MCF 10A (cell line): ENCODE measurements at regions of chr18 and their contacts with region 1.

Region 1: GRCh38 chr18:63979409-63979920 is 9.6 kb downstream of the SERPINB8 start:
- DNase-seq: peak; percentile 62
- H3K4me3 Mint-ChIP-seq: peak overlapping the region; percentile 19
- H3K27ac Mint-ChIP-seq: peak overlapping the region; percentile 46
- H3K4me1 Mint-ChIP-seq: peaks cover 19% of the 10 kb centered on the region
- H3K27me3 Mint-ChIP-seq: no peaks in the 10 kb centered on the region
- CTCF ChIP-seq: peak; percentile 74

Region 2: GRCh38 chr18:63439334-63439733 is 540.1 kb before region 1 on chr18:
- CTCF ChIA-PET with region 1: no interaction called
- POLR2A ChIA-PET with region 1: no interaction called
- intact Hi-C with region 1: no loop called
- DNase-seq: peak; percentile 71
- H3K4me3 Mint-ChIP-seq: no peak overlapping the region
- H3K27ac Mint-ChIP-seq: no peak overlapping the region
- H3K4me1 Mint-ChIP-seq: peaks cover 34% of the 10 kb centered on the region
- H3K27me3 Mint-ChIP-seq: no peaks in the 10 kb centered on the region
- CTCF ChIP-seq: peak; percentile 74

Region 3: DNA sequence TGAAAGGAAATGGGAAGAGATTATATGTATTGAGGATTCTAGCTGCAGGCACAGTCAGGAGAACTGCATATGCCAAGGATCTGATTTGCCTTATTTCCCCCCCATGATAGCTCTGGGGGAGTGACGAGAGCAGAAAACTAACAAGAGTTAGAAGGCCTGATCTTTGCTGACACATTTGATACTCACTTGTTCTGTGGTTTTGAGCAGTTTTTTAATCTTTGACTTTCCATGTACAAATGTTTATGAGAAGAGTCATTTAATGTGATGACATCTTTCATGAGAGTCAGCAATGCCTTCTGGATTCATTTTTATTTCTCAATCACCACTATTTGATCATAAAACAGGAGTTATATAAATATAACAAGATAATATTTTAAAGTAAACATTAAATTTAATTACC is 216.9 kb before region 1 on chr18:
- CTCF ChIA-PET with region 1: no interaction called
- POLR2A ChIA-PET with region 1: no interaction called
- intact Hi-C with region 1: no loop called
- DNase-seq: peak; percentile 64
- H3K4me3 Mint-ChIP-seq: no peak overlapping the region
- H3K27ac Mint-ChIP-seq: peak overlapping the region; percentile 10
- H3K4me1 Mint-ChIP-seq: peaks cover 15% of the 10 kb centered on the region
- H3K27me3 Mint-ChIP-seq: no peaks in the 10 kb centered on the region
- CTCF ChIP-seq: no peak

Region 4: GRCh38 chr18:63848159-63848558 is 131.3 kb before region 1 on chr18:
- CTCF ChIA-PET with region 1: interaction called, 5 read pairs
- POLR2A ChIA-PET with region 1: no interaction called
- intact Hi-C with region 1: loop called (anchors 2 kb)
- DNase-seq: peak; percentile 73
- H3K4me3 Mint-ChIP-seq: no peak overlapping the region
- H3K27ac Mint-ChIP-seq: no peak overlapping the region
- H3K4me1 Mint-ChIP-seq: no peaks in the 10 kb centered on the region
- H3K27me3 Mint-ChIP-seq: no peaks in the 10 kb centered on the region
- CTCF ChIP-seq: peak; percentile 64

Region 5: DNA sequence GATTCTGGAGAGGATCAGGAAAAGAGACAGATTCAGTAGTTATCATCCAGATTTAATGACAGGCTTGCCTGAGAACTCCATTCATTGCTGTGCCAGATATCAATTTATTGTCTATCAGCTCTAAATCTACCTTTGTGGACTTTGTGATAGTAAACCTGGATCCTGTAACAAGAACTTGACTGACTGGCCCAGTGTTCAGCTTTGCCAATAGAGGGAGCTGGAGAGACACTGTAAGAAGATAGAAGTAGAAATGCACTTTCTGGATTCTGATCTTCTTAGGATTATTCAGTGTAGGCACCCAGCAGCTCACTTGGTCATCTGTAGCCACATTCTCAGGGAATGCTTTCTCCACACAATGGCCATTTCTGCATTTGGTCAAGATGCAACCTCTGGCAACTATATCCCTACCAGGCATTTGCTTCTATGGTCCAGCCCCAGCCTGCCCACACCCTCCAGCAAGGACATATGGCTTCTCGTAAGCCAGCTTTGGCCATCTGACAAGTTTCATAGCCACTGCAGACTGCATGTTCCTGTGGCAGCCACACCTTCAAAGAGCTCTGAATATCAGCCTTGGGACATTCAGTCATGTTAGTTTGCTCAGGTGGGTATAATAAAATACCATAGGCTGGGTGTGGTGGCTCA is 15.7 kb before region 1 on chr18:
- CTCF ChIA-PET with region 1: interaction called, 77 read pairs
- POLR2A ChIA-PET with region 1: interaction called, 30 read pairs
- intact Hi-C with region 1: loop called (anchors 1 kb)
- DNase-seq: peak; percentile 69
- H3K4me3 Mint-ChIP-seq: no peak overlapping the region
- H3K27ac Mint-ChIP-seq: peak overlapping the region; percentile 9
- H3K4me1 Mint-ChIP-seq: peaks cover 13% of the 10 kb centered on the region
- H3K27me3 Mint-ChIP-seq: no peaks in the 10 kb centered on the region
- CTCF ChIP-seq: peak; percentile 77

Region 6: DNA sequence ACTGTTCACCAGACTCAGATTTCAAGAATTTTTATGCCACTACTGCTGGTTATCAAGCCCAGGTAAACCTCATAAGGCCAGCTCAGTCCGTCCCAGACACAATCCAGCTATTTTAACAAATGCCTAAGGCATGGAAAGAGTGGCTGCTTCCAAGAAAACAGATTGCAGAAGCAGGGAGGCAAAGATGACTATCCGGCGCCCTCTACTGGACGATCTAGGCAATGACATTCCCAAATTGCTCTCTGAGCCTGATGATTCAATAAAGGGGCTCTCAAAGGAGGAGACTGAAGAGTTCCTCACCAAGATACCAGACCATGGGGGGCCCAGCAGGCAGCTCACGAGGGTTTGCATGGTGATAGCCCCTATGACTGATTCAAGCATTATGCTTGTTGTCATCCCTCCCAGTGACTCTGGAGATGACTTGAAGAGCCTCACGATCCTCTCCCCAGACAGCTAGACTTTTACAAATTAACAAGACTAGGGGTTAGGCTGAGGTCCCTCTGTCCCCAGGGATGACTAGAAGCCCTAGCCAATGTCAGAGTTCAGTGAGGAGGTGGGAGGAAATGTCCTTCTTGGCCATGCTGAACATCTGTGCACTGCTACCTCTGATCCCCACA is 15.4 kb after region 1 on chr18:
- CTCF ChIA-PET with region 1: interaction called, 32 read pairs
- POLR2A ChIA-PET with region 1: no interaction called
- intact Hi-C with region 1: no loop called
- DNase-seq: peak; percentile 52
- H3K4me3 Mint-ChIP-seq: no peak overlapping the region
- H3K27ac Mint-ChIP-seq: no peak overlapping the region
- H3K4me1 Mint-ChIP-seq: no peaks in the 10 kb centered on the region
- H3K27me3 Mint-ChIP-seq: no peaks in the 10 kb centered on the region
- CTCF ChIP-seq: peak; percentile 92

Region 7: DNA sequence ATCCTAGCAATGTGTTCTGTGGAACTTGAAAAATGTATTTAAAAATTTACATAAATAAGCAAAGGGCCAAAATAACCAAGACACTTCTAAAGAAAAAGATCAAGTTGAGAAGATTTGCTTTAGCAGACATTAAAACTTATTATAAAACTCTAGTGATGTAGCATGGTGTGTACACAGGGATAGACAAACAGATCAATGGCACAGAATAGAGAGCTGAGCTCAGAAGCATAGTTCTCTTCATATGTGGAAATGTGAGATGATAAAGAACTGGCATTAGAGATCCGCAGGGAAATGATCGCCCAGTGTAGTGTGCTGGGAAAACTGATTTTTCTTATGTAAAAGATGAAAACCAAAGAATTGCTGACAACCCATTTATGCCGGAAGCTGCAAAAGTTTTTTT is 29.8 kb after region 1 on chr18:
- CTCF ChIA-PET with region 1: no interaction called
- POLR2A ChIA-PET with region 1: no interaction called
- intact Hi-C with region 1: no loop called
- DNase-seq: no peak
- H3K4me3 Mint-ChIP-seq: no peak overlapping the region
- H3K27ac Mint-ChIP-seq: no peak overlapping the region
- H3K4me1 Mint-ChIP-seq: no peaks in the 10 kb centered on the region
- H3K27me3 Mint-ChIP-seq: peaks cover 57% of the 10 kb centered on the region
- CTCF ChIP-seq: no peak